Activated T-helper 2 cell treated with anti-CD3 and anti-CD28 coated beads, Interferon-gamma antibody, Interleukin-2, Interleukin-4, amounts not matched to agents 10 μg/mL and 5 μg/mL and 100 μg/mL, durations not matched to agents 14 hours and 24 hours and 36 hours (primary cell): ENCODE measurements at regions of chr17 and their contacts with region 1.

Region 1: DNA sequence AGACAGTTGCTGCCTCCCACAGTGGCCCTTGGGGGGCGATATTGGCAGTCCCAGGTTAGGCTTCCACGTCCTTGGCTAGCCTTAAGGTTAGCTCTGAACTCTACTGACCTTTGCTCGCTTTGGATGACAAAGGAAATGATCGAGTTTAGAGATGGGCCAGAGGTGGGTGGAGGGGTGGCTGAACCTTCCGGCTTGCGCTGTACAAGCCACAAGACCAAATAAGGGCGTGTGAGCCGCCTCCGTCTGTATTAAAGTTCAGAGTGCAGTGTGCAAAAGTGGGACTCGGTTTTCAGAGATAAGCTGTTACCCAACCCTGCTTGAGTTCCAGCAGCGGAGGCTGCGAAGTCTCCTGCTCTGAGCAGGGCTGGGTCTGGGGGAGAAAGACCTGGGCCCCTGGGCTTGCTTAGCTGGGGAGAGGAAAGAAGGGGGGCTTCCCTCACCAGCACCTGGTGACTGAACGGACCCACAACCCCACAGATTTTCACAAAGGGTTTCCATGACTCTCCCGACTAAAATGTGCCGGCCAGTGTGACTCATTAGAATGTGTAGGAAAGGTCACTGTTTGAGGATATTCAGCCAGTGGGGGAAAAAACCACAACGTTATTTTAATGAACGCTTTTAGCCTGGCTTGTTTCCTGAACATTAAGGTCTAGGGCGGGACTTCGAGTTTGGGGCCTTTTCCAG is 67.2 kb downstream of the CENPV start:
- DNase-seq: peak; percentile 79
- H3K4me3 Mint-ChIP-seq: peak overlapping the region; percentile 61
- H3K27ac Mint-ChIP-seq: peak overlapping the region; percentile 97
- H3K4me1 Mint-ChIP-seq: peaks cover 51% of the 10 kb centered on the region
- H3K27me3 Mint-ChIP-seq: no peaks in the 10 kb centered on the region

Region 2: DNA sequence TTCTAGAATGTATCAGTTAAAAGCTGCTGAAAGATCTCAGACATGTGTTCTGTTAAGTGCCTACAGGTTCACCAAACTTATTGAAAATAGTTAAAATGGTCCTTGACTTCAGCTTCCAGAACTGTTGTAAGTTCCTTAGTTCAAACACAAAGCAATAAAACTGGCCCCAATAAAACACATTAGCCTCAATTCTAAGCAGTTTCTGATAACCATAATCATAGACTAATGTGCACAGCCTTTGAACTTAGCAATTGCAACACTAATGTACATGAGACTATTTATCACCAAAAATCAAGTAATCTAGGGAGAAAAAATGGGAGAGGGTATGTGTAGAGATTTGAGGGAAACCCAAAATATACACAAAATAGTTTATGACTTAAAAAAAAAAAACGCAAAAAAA is 53.7 kb before region 1 on chr17:
- intact Hi-C with region 1: loop called (anchors 1 kb)
- DNase-seq: no peak
- H3K4me3 Mint-ChIP-seq: no peak overlapping the region
- H3K27ac Mint-ChIP-seq: no peak overlapping the region
- H3K4me1 Mint-ChIP-seq: peaks cover 18% of the 10 kb centered on the region
- H3K27me3 Mint-ChIP-seq: no peaks in the 10 kb centered on the region

Region 3: GRCh38 chr17:16353317-16354174 is 67.4 kb after region 1 on chr17 and contains the start of gene CENPV:
- intact Hi-C with region 1: loop called (anchors 2 kb)
- DNase-seq: peak; percentile 49
- H3K4me3 Mint-ChIP-seq: peak within 1 kb of the TSS; percentile 97
- H3K27ac Mint-ChIP-seq: peak within 1 kb of the TSS; percentile 71
- H3K4me1 Mint-ChIP-seq: peaks cover 17% of the 10 kb centered on the region
- H3K27me3 Mint-ChIP-seq: peaks cover 17% of the 10 kb centered on the region
- total RNA-seq, gene CENPV: 65.8 and 69.9 TPM in 2 replicates

Region 4: DNA sequence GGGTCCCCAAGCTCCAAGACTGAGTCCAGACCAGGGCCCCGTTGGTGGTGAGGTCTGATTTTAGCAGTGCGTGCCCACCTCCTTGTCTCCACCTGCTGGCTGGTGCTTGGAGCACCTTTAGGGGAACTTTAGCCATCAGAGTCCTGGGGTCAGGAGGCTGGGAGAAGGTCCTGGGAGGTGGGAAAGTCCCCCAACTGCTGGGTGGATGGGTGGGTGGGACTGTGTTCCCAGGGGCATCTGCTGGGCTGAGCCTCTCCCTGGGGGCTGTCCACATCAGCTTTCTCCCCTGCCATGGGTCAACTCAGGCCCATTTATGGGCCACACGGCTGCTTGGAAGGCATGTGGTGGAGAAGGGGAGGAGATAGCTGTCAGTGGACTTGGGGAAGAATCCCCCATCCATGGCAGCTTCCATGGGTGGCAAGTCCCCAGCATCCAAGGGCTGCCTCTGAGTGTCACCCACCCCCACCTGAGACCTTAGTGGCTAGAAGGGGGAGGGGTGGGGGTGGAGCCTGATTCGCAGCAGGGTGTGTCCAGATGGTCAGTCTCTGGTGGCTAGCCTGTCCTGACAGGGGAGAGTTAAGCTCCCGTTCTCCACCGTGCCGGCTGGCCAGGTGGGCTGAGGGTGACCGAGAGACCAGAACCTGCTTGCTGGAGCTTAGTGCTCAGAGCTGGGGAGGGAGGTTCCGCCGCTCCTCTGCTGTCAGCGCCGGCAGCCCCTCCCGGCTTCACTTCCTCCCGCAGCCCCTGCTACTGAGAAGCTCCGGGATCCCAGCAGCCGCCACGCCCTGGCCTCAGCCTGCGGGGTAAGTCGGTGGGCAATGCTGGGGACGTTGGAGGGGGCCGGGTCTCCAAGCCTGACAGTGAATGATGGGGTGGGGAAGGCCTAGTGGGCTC is 129.2 kb after region 1 on chr17 and contains the start of gene TRPV2:
- intact Hi-C with region 1: loop called (anchors 5 kb)
- DNase-seq: peak; percentile 30
- H3K4me3 Mint-ChIP-seq: peak within 1 kb of the TSS; percentile 96
- H3K27ac Mint-ChIP-seq: peak within 1 kb of the TSS; percentile 96
- H3K4me1 Mint-ChIP-seq: peaks cover 37% of the 10 kb centered on the region
- H3K27me3 Mint-ChIP-seq: no peaks in the 10 kb centered on the region
- total RNA-seq, gene TRPV2: 44.4 and 46.8 TPM in 2 replicates

Region 5: DNA sequence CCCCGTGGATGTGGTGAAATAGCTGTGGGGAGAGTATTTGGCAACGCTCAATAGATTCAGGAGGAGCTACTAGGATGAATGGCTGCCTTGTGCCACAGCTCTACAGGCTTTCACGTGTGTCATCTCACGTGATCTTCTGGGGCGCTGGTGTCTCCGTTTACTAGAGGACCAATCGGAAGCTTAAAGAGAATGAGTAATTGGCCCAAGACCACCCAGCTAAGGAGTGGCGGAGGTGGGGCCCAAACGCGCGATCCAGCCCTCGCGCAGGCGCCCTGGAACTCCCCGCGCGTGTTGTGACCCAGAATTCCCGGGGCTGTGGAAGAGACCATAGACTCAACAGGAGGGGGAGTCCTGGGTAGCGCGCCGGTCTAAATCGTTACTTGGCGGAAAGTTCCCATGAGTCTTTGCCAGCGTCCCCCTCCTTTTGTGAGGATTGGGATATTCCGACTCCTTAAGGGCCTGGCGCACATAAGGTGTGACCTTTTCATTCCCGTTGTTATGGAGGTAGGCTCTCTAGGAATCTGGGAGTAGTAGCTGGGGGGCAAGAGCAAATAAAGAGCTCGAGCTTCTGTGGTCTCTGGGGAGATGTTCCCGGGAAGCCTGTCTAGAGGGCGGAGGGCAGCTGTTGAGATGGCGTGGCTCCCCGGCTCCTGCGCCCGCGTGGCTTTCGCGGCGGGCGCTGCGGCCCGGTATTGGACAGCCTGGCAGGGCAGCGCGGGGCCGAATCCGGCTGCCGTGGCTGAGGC is 152.6 kb after region 1 on chr17:
- intact Hi-C with region 1: loop called (anchors 5 kb)
- DNase-seq: peak; percentile 95
- H3K4me3 Mint-ChIP-seq: peak overlapping the region; percentile 98
- H3K27ac Mint-ChIP-seq: peak overlapping the region; percentile 94
- H3K4me1 Mint-ChIP-seq: peaks cover 27% of the 10 kb centered on the region
- H3K27me3 Mint-ChIP-seq: no peaks in the 10 kb centered on the region